Common myeloid progenitor, CD34-positive (primary cell): ENCODE measurements at regions of chr17 and their contacts with region 1.

Region 1: DNA sequence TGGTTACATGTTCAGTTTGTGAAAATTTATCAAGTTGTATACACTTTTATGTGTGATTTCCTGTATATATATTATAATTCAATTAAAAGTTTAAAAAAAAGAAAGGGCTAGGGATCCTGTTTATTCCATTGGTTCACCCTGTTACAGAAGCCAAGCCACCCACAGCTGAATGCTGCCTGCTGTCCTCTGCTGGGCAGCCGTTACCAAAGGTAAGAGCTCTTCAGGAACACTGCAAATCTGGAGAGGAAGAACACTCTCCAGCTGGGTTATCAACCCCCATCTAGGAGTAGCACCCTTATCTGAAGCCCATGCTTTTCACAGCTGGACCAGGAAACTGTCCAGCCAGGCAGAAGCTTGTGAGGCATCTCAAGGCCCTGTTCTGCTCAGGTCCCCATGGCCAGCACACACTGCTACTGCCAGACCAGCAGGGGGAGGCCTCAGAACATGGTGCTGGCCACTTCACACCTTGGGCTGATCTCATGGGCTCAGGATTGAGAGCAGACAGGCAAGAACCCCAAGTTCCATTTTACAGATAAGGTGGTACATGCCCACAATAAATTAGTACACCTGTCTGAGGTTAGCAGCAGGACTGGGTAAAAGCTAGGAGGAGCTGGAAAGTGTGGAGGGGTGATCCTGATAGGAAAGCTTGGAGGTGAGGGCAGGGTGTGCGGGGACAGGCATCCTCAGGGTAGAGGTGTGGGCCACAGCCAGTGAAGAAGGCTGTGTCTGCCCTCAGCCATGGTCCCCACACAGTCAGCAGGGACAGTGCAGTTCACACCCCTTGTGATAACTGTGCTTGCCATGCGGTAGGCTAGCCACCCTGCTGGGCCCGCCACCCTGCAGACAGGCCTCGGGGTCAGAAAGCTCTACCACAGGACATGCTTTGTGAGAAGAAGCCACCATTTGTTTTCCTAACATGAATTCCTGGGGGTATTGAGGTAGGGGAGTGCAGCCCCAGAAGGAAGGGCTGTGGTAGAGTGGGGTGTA is 54.3 kb upstream of the SREBF1 start:
- DNase-seq: peak; percentile 58 to 69 (median 69)
- H3K4me3 ChIP-seq: no peak overlapping the region
- H3K27ac ChIP-seq: no peak overlapping the region
- H3K4me1 ChIP-seq: no peaks in the 10 kb centered on the region
- H3K27me3 ChIP-seq: no peaks in the 10 kb centered on the region

Region 2: GRCh38 chr17:17880577-17881196 is 10.4 kb before region 1 on chr17:
- CTCF ChIA-PET with region 1: no interaction called
- POLR2A ChIA-PET with region 1: no interaction called
- DNase-seq: no peak
- H3K4me3 ChIP-seq: no peak overlapping the region
- H3K27ac ChIP-seq: no peak overlapping the region
- H3K4me1 ChIP-seq: no peaks in the 10 kb centered on the region
- H3K27me3 ChIP-seq: no peaks in the 10 kb centered on the region

Region 3: DNA sequence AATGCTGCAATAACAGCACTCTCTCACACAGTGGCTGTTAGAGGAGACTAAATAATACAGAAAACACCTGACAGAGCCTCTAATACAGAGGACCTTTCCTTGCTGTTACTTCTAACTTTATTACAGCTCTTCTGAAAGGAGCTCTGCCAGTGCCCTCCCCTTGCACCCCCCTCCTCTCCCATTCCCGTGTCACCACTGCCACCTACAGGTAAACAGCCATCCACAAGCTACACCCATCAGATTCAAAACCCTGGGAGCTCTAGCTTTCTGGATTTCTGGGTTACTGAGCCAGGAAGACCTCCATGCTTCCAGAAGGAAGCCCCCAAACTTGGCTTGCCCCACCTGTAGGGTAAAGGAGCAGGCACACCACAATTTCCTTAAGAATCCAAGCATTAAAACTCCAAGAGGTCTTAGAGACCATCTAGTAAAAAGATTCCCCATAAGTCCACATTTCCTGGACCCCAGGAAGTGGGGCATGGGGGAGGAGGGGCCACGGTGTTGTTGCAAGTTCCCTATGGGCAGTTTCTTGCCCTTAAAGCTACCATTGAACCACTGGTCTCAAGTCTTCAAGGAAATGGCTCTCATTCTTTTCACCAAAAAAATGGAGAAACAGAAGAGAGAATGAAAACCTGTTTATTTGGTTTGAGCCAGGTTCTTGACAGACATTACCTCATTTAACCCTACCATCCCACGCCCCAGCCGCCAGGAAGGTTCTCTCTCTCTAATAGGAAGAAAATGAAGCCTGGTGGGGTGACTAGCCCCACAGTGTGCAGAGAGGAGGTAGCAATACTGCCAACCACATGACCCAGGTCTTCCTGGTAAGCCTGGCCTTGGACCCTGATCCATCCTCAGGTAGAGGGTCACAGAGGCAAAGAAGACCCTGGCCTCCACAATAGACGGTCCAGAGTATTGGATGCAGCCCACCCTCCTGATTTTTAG is 28.4 kb after region 1 on chr17:
- CTCF ChIA-PET with region 1: interaction called, 16 read pairs
- POLR2A ChIA-PET with region 1: no interaction called
- DNase-seq: peak; percentile 68 to 84 (median 79)
- H3K4me3 ChIP-seq: no peak overlapping the region
- H3K27ac ChIP-seq: no peak overlapping the region
- H3K4me1 ChIP-seq: peaks cover 5 to 30% (median 10%) of the 10 kb centered on the region in 4 experiments
- H3K27me3 ChIP-seq: no peaks in the 10 kb centered on the region

Region 4: DNA sequence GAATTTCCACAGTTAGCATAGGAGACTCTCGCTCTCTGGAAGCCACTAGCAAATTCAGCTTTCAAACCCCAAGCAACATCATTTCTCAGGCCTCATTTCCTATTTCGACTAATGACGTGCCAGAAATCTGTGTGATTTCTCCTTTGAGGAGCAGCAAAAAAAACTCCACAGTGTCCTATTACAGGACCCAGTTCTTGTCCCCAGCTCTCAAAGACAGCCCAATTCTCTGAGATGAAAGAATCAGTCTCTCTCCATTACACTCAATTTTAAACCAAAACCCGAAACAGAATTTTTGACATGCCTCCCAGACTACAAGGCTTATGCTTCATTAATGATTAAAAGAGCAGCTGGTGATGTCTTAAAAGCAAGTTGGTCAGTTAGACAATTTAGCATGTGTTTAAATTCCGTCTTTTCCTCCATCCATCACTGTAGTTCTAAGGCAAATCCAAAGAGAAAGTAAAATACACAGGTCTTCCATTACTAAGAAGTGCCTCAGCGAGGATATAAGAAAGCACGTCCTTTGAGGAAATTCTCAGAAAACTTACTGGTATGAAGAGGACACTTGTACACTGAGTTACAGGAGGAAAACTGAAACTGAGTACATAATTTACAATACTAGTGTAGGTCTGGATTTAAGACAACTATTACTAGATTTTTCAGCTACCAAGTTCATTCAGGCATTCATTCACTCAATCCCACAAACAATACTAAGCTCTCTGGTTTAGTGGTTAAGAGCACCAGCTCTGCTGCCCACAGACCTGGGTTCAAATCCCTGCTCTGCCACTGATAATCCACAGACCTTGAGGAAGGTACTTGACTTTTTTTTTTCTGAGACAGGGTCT is 68.7 kb after region 1 on chr17:
- CTCF ChIA-PET with region 1: no interaction called
- POLR2A ChIA-PET with region 1: no interaction called
- DNase-seq: peak in 2 of 3 donors; percentile 26 to 28
- H3K4me3 ChIP-seq: peak overlapping the region in 4 of 7 experiments; percentile 11 to 46 (median 30)
- H3K27ac ChIP-seq: peak overlapping the region; percentile 25 to 47
- H3K4me1 ChIP-seq: peaks cover 3 to 27% (median 3%) of the 10 kb centered on the region in 4 experiments
- H3K27me3 ChIP-seq: no peaks in the 10 kb centered on the region

Region 5: GRCh38 chr17:18033442-18034099 is 142.5 kb after region 1 on chr17:
- CTCF ChIA-PET with region 1: interaction called, 10 read pairs
- POLR2A ChIA-PET with region 1: interaction called, 5 read pairs
- DNase-seq: peak; percentile 88 to 94 (median 93)
- H3K4me3 ChIP-seq: no peak overlapping the region
- H3K27ac ChIP-seq: no peak overlapping the region
- H3K4me1 ChIP-seq: peaks cover 9 to 21% (median 16%) of the 10 kb centered on the region in 4 experiments
- H3K27me3 ChIP-seq: no peaks in the 10 kb centered on the region